Gastrocnemius medialis (tissue), 4 donors: ENCODE measurements at regions of chr9 and their contacts with region 1.

Region 1: DNA sequence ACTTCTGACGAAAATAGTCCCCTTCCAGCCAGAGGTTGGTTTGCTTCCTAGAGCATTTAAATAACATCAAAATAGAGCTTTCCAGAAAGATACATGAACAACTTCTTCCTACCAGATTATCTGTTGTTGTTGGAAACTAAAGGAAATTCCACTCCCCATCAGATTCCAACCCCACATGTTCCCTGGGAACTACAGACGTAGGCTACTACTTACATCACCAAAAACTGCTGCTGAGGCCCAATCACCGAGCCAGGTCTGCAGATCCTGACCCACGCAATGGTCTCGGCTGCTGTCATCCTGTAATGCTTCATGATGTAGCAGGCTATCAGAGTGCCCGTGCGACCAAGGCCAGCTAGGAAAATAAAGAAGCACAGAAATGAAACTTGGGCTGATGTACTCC is 73.4 kb downstream of the HABP4 start:
- DNase-seq: no peak
- ATAC-seq: no peak
- H3K4me3 ChIP-seq: no peak overlapping the region
- H3K27ac ChIP-seq: peak overlapping the region in 1 of 4 donors; percentile 46
- H3K4me1 ChIP-seq: no peaks in the 10 kb centered on the region
- H3K27me3 ChIP-seq: no peaks in the 10 kb centered on the region
- CTCF ChIP-seq: no peak
- POLR2A ChIP-seq: no peak

Region 2: DNA sequence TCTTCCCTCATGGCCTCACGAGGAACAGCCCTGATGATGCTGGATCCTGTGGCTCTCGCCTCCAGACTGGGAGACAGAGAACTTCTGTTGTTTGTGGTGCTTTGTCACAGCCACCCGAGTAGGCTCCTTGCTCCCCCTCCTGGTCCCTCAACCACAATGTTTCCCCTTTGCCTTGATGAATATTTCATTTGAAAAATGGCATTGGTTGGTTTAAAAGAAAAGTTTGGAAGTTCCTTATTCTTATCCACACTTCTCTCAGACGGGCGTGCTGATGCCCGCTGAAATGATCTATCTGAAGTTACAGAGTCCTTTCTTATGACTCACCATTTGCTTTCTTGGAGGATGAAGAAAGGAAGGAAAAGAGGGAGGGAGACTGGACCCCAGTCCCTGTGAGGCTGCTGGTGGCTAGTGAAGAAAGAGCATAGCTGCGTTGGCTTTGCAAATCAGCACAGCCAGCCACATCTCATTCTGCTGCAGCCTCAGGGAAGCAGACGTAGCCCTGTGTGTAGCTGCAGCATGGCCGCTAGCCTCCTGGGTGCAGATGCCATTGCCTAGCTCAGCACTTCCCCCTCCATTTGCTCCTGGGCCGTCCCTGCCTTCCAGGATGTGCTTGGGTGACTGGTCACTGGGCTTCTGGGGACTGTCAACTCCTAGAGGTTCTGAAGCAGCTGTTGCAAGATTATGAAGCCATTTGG is 461.9 kb before region 1 on chr9:
- in situ Hi-C with region 1: no loop called
- intact Hi-C with region 1: no loop called
- DNase-seq: no peak
- ATAC-seq: no peak
- H3K4me3 ChIP-seq: no peak overlapping the region
- H3K27ac ChIP-seq: no peak overlapping the region
- H3K4me1 ChIP-seq: no peaks in the 10 kb centered on the region
- H3K27me3 ChIP-seq: no peaks in the 10 kb centered on the region
- CTCF ChIP-seq: peak in 2 of 5 experiments; percentile 23 to 28
- POLR2A ChIP-seq: no peak

Region 3: DNA sequence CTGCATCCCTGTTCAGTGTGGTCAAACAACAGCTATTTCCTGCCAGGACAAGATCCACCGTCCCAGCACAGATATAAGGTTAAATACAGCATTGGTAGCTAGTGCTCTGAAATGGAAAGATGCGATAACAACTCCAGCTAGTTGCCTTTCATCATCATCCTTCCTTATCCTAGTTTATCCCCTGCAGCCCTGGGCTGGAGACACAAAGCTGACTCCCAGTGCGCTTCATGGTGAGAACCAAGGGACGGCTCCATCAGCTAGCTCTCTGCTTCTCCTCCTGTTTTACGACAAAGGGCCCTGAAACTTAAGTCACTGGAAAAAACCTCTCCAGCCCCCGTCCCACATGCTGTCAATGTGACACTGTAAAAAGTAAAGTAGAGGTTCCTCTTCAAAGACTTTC is 58.4 kb after region 1 on chr9:
- in situ Hi-C with region 1: loop called in 1 of 4 experiments (anchors 10 kb)
- intact Hi-C with region 1: no loop called
- DNase-seq: no peak
- ATAC-seq: no peak
- H3K4me3 ChIP-seq: no peak overlapping the region
- H3K27ac ChIP-seq: no peak overlapping the region
- H3K4me1 ChIP-seq: no peaks in the 10 kb centered on the region
- H3K27me3 ChIP-seq: no peaks in the 10 kb centered on the region
- CTCF ChIP-seq: no peak
- POLR2A ChIP-seq: no peak

Region 4: GRCh38 chr9:96719921-96720320 is 196.5 kb after region 1 on chr9:
- in situ Hi-C with region 1: no loop called
- intact Hi-C with region 1: no loop called
- DNase-seq: no peak
- ATAC-seq: no peak
- H3K4me3 ChIP-seq: peak overlapping the region in 3 of 4 donors; percentile 17 to 40 (median 20)
- H3K27ac ChIP-seq: no peak overlapping the region
- H3K4me1 ChIP-seq: peaks cover 0 to 6% of the 10 kb centered on the region in 2 donors
- H3K27me3 ChIP-seq: peaks cover 0 to 9% (median 6%) of the 10 kb centered on the region in 3 donors
- CTCF ChIP-seq: no peak
- POLR2A ChIP-seq: no peak